Activated T-helper 1 cell treated with anti-CD3 and anti-CD28 coated beads, Interleukin-12 subunit alpha, Interleukin-12 subunit beta, Interleukin-2, Interleukin-4 antibody, amounts not matched to agents 30 ng/mL and 10 ng/mL and 1 ng/mL, durations not matched to agents 14 hours and 24 hours and 36 hours (primary cell): ENCODE measurements at regions of chr19 and their contacts with region 1.

Region 1: GRCh38 chr19:2820112-2820702 is 539 bp downstream of the ZNF554 start:
- DNase-seq: no peak
- H3K4me3 Mint-ChIP-seq: peak overlapping the region; percentile 81
- H3K27ac Mint-ChIP-seq: no peak overlapping the region
- H3K4me1 Mint-ChIP-seq: no peaks in the 10 kb centered on the region
- H3K27me3 Mint-ChIP-seq: no peaks in the 10 kb centered on the region

Region 2: GRCh38 chr19:2702162-2703076 is 117.8 kb before region 1 on chr19 and contains the start of gene GNG7:
- intact Hi-C with region 1: loop called (anchors 1 kb)
- DNase-seq: peak; percentile 88
- H3K4me3 Mint-ChIP-seq: peak within 1 kb of the TSS; percentile 62
- H3K27ac Mint-ChIP-seq: no peak within 1 kb of the TSS
- H3K4me1 Mint-ChIP-seq: no peaks in the 10 kb centered on the region
- H3K27me3 Mint-ChIP-seq: peaks cover 6% of the 10 kb centered on the region
- total RNA-seq, gene GNG7: 0.07 and 0.13 TPM in 2 replicates

Region 3: GRCh38 chr19:2840794-2841790 is 20.9 kb after region 1 on chr19 and contains the start of gene ZNF555:
- intact Hi-C with region 1: loop called (anchors 1 kb)
- DNase-seq: peak; percentile 84
- H3K4me3 Mint-ChIP-seq: peak within 1 kb of the TSS; percentile 81
- H3K27ac Mint-ChIP-seq: no peak within 1 kb of the TSS
- H3K4me1 Mint-ChIP-seq: no peaks in the 10 kb centered on the region
- H3K27me3 Mint-ChIP-seq: peaks cover 12% of the 10 kb centered on the region
- total RNA-seq, gene ZNF555: 0.37 and 0.65 TPM in 2 replicates

Region 4: DNA sequence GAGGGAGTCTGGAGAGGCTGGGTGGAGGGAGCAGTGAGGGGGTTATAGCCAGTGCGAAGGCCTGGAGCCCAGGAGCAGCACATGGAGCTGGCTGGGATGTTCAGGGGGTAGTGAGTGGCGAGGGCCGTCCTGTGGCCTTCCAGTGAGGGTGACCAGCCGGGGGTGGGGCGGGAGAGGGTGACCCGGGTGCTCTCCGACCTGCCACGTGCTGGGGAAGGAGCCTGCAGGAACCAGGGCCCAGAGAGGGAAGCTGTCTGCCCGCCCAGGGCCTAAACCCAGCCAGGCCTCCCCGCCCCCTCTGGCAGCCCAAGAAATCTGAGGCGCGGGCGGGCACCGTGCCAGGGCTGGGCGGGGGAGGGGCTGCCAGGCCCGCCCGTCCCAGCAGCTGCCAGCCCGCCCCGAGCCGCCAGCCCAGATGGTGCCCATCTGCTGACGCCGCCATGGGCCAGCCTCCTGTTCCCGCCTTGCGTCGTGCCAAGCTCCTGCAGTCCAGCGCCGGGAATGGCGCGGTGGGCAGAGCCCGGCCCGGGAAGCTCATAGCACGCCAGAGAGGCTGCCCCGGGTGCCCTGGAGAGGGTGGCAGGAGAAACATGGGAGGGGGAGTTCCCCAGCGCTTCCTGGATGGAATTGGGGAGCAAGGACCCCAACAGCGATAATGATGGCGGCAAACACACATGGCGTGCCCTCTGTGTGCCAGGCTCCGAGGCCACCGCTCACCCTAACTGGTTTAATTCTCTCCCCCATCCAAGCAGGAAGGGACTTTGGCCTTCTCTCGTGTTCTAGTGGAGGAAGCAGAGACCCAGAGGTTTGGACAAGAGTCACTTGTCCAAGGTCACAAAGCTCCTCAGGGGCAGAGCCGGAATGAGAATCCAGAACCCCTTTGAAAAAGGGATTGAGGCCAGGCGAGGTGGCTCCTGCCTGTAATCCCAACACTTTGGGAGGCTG is 567.7 kb after region 1 on chr19:
- intact Hi-C with region 1: no loop called
- DNase-seq: no peak
- H3K4me3 Mint-ChIP-seq: no peak overlapping the region
- H3K27ac Mint-ChIP-seq: no peak overlapping the region
- H3K4me1 Mint-ChIP-seq: no peaks in the 10 kb centered on the region
- H3K27me3 Mint-ChIP-seq: no peaks in the 10 kb centered on the region